Activated naive CD4-positive, alpha-beta T cell treated with anti-CD3 and anti-CD28 coated beads for 36 hours (primary cell): ENCODE measurements at regions of chr1 and their contacts with region 1.

Region 1: DNA sequence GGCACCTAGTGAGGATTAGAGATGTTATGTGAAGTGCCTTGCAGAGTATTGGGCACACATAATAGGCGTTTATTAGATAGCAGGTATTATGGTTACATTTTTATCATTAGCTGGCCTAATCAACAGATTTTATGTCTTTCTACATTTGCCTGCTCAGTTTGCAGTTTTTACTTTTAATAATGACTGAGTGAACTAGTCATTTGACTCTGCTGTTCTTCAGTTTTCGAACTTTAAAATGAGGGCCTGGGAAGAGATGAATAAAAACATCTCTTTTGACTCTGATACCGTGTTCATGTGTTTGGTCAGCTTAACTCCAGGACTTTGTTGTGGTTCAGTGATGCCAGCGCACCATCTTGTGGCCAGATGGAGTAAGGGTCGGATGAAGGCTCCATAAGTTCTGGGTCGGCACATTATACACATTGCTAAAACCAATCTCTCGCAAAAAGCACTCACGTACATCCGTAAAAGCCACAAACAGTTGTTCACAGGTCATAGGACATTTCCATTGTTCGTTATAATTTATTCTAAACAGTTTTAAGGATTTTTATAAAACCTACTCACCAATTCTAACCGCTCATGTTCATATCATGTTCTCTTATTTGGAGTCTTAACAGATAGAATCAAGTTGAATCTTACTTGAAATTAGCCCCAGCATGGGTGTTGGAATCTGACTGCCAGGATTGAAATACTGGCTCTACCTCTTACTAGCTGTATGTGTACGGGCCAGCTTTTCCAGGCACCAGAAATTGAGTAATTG is 78.4 kb upstream of the GPR88 start:
- DNase-seq: peak; percentile 86
- H3K4me3 Mint-ChIP-seq: no peak overlapping the region
- H3K27ac Mint-ChIP-seq: peak overlapping the region; percentile 43
- H3K4me1 Mint-ChIP-seq: peaks cover 46% of the 10 kb centered on the region
- H3K27me3 Mint-ChIP-seq: no peaks in the 10 kb centered on the region

Region 2: GRCh38 chr1:99849744-99850458 is 609.6 kb before region 1 on chr1 and contains the start of gene AGL:
- CTCF ChIA-PET with region 1: interaction called, 3 read pairs
- intact Hi-C with region 1: loop called (anchors 2 kb)
- DNase-seq: peak; percentile 89
- H3K4me3 Mint-ChIP-seq: peak within 1 kb of the TSS; percentile 98
- H3K27ac Mint-ChIP-seq: peak within 1 kb of the TSS; percentile 91
- H3K4me1 Mint-ChIP-seq: peaks cover 23% of the 10 kb centered on the region
- H3K27me3 Mint-ChIP-seq: no peaks in the 10 kb centered on the region
- total RNA-seq, gene AGL: 15.6 to 16.8 TPM

Region 3: GRCh38 chr1:100249537-100250257 is 209.8 kb before region 1 on chr1 and contains the start of gene DBT:
- CTCF ChIA-PET with region 1: interaction called, 5 read pairs
- intact Hi-C with region 1: loop called (anchors 1 kb)
- DNase-seq: peak; percentile 97
- H3K4me3 Mint-ChIP-seq: no peak within 1 kb of the TSS
- H3K27ac Mint-ChIP-seq: no peak within 1 kb of the TSS
- H3K4me1 Mint-ChIP-seq: peaks cover 18% of the 10 kb centered on the region
- H3K27me3 Mint-ChIP-seq: no peaks in the 10 kb centered on the region
- total RNA-seq, gene DBT: 12.3 to 12.5 TPM

Region 4: GRCh38 chr1:100292711-100293110 is 166.8 kb before region 1 on chr1:
- CTCF ChIA-PET with region 1: interaction called, 6 read pairs
- intact Hi-C with region 1: loop called (anchors 5 kb)
- DNase-seq: no peak
- H3K4me3 Mint-ChIP-seq: no peak overlapping the region
- H3K27ac Mint-ChIP-seq: no peak overlapping the region
- H3K4me1 Mint-ChIP-seq: peaks cover 3% of the 10 kb centered on the region
- H3K27me3 Mint-ChIP-seq: no peaks in the 10 kb centered on the region

Region 5: DNA sequence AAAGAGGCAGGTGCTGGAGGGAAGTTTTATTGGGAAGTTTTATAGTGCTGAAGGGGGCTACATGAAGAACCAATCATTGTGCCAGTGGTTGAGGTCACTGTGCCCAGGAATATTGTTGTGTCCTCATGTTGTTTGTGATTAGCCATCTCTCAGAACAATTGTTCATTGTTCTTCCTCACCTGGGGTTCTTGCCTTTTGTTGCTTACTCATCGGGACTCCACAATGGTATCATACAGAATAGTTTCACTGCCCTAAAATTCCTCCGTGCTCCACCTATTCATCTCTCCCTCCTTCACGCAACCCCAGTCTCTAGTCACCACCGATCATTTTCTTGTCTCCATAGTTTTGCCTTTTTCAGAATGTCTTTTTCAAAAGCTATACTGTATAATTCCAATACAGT is 146.2 kb before region 1 on chr1:
- CTCF ChIA-PET with region 1: no interaction called
- intact Hi-C with region 1: no loop called
- DNase-seq: no peak
- H3K4me3 Mint-ChIP-seq: no peak overlapping the region
- H3K27ac Mint-ChIP-seq: no peak overlapping the region
- H3K4me1 Mint-ChIP-seq: peaks cover 1% of the 10 kb centered on the region
- H3K27me3 Mint-ChIP-seq: no peaks in the 10 kb centered on the region

Region 6: GRCh38 chr1:100387209-100387608 is 72.3 kb before region 1 on chr1:
- CTCF ChIA-PET with region 1: interaction called, 11 read pairs
- intact Hi-C with region 1: no loop called
- DNase-seq: no peak
- H3K4me3 Mint-ChIP-seq: peak overlapping the region; percentile 47
- H3K27ac Mint-ChIP-seq: peak overlapping the region; percentile 56
- H3K4me1 Mint-ChIP-seq: peaks cover 82% of the 10 kb centered on the region
- H3K27me3 Mint-ChIP-seq: no peaks in the 10 kb centered on the region

Region 7: DNA sequence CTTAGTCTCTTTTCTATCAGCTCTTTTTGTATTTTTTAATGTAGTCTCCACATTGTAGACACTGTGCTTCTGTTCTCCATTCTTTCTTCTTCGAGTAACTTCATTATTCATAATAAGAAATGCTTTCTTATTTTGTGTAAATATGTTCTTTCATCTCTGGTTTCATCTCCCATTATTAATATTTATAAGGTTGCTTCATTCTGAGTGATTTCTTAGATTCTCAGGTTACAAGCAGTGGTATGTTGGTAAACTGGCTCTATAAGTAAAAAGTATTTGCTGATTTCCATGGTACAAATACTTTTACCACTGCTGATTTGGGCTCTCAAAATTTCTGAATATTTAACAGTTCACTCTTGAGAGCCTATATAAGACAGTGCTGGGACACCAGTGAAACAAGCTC is 26.0 kb before region 1 on chr1:
- CTCF ChIA-PET with region 1: interaction called, 15 read pairs
- intact Hi-C with region 1: no loop called
- DNase-seq: no peak
- H3K4me3 Mint-ChIP-seq: no peak overlapping the region
- H3K27ac Mint-ChIP-seq: no peak overlapping the region
- H3K4me1 Mint-ChIP-seq: peaks cover 61% of the 10 kb centered on the region
- H3K27me3 Mint-ChIP-seq: no peaks in the 10 kb centered on the region

Region 8: DNA sequence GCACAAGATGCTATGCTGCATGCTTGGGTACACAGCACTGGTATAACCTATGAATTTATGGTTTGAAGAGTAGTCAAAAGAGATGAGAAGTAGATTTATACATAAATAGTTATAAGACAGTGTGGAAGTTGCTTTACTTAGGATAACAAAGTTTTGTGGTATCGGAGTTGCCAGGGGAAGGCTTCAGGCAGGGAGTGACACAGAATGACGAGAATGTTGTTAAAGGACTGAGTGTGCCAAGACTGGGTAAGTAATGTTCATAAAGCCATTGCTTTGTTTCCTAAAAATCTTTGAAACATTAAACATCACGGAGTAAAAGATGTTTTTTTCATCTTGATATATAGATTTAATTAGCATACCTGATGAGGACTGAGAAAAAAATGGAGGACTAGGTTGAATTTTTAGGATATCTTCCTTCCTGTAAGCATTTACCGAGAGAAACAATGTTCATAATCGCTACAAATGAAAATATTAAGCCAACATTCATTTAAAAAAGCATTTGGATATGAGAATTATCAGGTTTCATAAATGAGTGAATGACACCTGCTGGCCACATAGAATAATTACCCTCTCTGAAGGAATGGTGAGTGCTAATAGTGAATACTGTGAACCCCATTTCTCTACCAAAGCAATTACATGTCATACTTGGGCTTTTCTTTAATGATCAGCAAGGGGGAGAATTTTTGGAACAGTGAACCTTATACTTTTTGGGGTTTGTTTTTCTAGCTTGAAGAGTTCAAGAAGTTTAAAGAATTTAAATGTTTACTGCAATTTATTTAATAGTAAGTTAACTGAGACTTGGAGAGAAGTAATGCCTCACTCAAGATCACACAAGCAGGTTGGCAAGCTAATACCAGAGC is 406.7 kb after region 1 on chr1:
- CTCF ChIA-PET with region 1: interaction called, 85 read pairs
- intact Hi-C with region 1: loop called (anchors 1 kb)
- DNase-seq: no peak
- H3K4me3 Mint-ChIP-seq: no peak overlapping the region
- H3K27ac Mint-ChIP-seq: no peak overlapping the region
- H3K4me1 Mint-ChIP-seq: peaks cover 2% of the 10 kb centered on the region
- H3K27me3 Mint-ChIP-seq: no peaks in the 10 kb centered on the region